ENCODE measurements at regions of chr1 and their contacts with region 1.

Region 1: GRCh38 chr1:228457396-228458176 is 29.6 kb upstream of the RNF187 start:
- DNase-seq: peak; percentile 92
- ATAC-seq: peak; percentile 89
- H3K4me3 Mint-ChIP-seq: peak overlapping the region; percentile 88
- H3K27ac Mint-ChIP-seq: peak overlapping the region; percentile 96
- H3K4me1 Mint-ChIP-seq: peaks cover 30% of the 10 kb centered on the region
- H3K27me3 Mint-ChIP-seq: no peaks in the 10 kb centered on the region

Region 2: GRCh38 chr1:228109073-228109961 is 348.3 kb before region 1 on chr1 and contains the start of gene MRPL55:
- CTCF ChIA-PET with region 1: no interaction called
- POLR2A ChIA-PET with region 1: no interaction called
- intact Hi-C with region 1: loop called in 1 of 2 experiments (anchors 2 kb)
- DNase-seq: peak; percentile 99
- ATAC-seq: peak; percentile 92
- H3K4me3 Mint-ChIP-seq: peak within 1 kb of the TSS; percentile 90
- H3K27ac Mint-ChIP-seq: peak within 1 kb of the TSS; percentile 92
- H3K4me1 Mint-ChIP-seq: peaks cover 21% of the 10 kb centered on the region
- H3K27me3 Mint-ChIP-seq: no peaks in the 10 kb centered on the region
- total RNA-seq, gene MRPL55: 51.0 to 57.7 TPM

Region 3: DNA sequence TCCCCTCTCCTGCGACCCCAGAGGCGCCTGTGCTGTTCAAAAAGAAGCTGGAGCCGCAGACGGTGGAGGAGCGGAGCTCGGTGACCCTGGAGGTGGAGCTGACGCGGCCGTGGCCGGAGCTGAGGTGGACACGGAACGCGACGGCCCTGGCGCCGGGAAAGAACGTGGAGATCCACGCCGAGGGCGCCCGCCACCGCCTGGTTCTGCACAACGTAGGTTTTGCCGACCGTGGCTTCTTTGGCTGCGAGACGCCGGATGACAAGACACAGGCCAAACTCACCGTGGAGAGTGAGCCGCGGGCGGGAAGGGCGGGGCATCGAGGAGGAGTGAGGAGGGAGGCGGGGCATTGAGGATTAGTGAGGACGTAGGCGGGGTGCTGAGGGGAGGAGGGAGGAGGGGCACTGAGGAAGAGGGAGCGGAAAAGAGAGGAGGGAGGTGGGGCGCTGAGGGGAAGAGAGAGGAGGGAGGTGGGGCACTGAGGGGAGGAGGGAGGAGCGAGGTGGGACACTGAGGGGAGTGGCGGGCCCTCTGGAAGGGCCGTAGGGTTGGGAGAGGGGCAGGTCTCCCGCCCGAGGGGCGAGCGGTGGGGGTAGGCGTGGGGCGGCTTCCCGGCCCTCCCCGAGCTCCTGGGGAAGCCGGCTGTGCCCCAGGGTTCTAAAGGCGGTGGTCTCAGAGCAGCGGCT is 181.7 kb before region 1 on chr1:
- CTCF ChIA-PET with region 1: interaction called, 5 read pairs
- POLR2A ChIA-PET with region 1: no interaction called
- intact Hi-C with region 1: loop called in 1 of 2 experiments (anchors 2 kb)
- DNase-seq: peak; percentile 94
- ATAC-seq: peak; percentile 96
- H3K4me3 Mint-ChIP-seq: peak overlapping the region; percentile 71
- H3K27ac Mint-ChIP-seq: no peak overlapping the region
- H3K4me1 Mint-ChIP-seq: peaks cover 6% of the 10 kb centered on the region
- H3K27me3 Mint-ChIP-seq: no peaks in the 10 kb centered on the region

Region 4: GRCh38 chr1:228471762-228472398 is 14.3 kb after region 1 on chr1:
- CTCF ChIA-PET with region 1: interaction called, 16 read pairs
- POLR2A ChIA-PET with region 1: no interaction called
- intact Hi-C with region 1: no loop called
- DNase-seq: peak; percentile 28
- ATAC-seq: peak; percentile 86
- H3K4me3 Mint-ChIP-seq: no peak overlapping the region
- H3K27ac Mint-ChIP-seq: no peak overlapping the region
- H3K4me1 Mint-ChIP-seq: peaks cover 8% of the 10 kb centered on the region
- H3K27me3 Mint-ChIP-seq: peaks cover 7% of the 10 kb centered on the region

Region 5: DNA sequence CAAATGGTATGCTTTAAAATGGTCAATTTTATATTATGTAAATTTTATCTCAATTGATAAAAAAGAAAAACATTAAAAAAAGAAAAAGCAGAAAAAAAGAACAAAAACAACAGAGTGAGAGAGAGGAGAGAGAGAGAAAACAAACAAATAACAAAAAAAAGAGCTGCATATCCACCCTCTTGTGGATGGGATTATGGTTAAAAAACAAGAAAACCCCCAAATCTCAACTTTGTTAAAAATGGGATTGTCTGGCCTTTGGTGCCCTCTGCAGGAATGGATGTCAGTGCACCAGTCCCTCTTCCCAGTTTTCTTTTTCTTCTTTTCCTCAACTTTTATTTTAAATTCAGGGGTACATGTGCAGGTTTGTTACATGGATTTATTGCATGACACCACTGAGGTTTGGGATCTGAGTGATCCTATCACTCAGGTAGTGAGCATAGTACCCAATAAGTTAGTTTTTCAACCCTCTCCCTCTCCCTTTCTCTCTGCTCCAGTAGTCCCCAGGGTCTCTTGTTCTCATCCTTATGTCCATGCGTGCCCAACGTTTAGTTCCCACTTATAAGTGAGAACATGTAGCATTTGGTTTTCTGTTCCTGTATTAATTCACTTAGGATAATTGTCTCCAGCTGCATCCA is 57.7 kb after region 1 on chr1:
- CTCF ChIA-PET with region 1: no interaction called
- POLR2A ChIA-PET with region 1: no interaction called
- intact Hi-C with region 1: no loop called
- DNase-seq: peak; percentile 45
- ATAC-seq: no peak
- H3K4me3 Mint-ChIP-seq: no peak overlapping the region
- H3K27ac Mint-ChIP-seq: no peak overlapping the region
- H3K4me1 Mint-ChIP-seq: peaks cover 8% of the 10 kb centered on the region
- H3K27me3 Mint-ChIP-seq: peaks cover 18% of the 10 kb centered on the region

Region 6: DNA sequence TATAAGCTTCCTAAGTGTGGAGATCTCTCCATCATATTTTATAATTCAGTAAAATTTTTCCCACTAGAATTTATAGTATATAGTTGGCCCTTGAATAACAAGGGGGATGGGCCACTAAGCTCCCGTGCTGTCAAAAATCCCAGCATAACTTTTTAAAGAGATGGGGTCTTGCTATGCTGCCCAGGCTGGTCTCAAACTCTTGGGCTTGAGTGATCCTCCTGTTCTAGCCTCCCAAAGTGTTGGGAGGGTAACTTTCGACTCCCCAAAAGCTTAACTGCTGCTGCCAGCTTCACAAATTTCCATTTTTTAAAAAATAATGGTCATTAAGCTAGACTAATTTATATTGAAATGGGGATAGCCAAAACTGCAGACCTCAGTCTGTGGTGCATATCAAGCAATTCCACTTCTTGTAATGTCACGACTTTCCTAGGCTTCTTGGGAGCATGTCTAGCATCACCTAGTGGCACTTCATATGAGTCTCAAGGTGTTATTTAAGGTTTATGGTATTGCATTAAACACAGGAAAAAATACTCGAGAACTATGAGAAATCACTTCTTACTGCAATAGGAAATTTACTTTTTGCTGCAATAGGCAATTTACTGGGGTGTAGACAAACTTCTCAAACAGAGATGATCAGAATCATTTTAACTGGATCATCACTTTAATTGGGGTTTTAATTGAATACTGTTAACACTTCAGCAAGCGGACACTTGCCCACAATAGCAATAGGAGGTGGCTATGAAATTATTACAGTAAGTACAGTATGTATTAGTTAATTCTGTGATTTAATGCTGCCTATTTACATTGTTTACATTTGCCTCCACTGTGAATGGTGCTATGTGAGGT is 995.6 kb after region 1 on chr1:
- CTCF ChIA-PET with region 1: no interaction called
- POLR2A ChIA-PET with region 1: no interaction called
- intact Hi-C with region 1: no loop called
- DNase-seq: no peak
- ATAC-seq: no peak
- H3K4me3 Mint-ChIP-seq: no peak overlapping the region
- H3K27ac Mint-ChIP-seq: no peak overlapping the region
- H3K4me1 Mint-ChIP-seq: no peaks in the 10 kb centered on the region
- H3K27me3 Mint-ChIP-seq: no peaks in the 10 kb centered on the region

Region 7: GRCh38 chr1:229507951-229508822 is 1050.6 kb after region 1 on chr1 and contains the start of gene NUP133:
- CTCF ChIA-PET with region 1: no interaction called
- POLR2A ChIA-PET with region 1: no interaction called
- intact Hi-C with region 1: loop called in 1 of 2 experiments (anchors 10 kb)
- DNase-seq: peak; percentile 100
- ATAC-seq: peak; percentile 95
- H3K4me3 Mint-ChIP-seq: peak within 1 kb of the TSS; percentile 95
- H3K27ac Mint-ChIP-seq: peak within 1 kb of the TSS; percentile 92
- H3K4me1 Mint-ChIP-seq: peaks cover 24% of the 10 kb centered on the region
- H3K27me3 Mint-ChIP-seq: no peaks in the 10 kb centered on the region
- total RNA-seq, gene NUP133: 53.5 to 57.5 TPM

Measured in activated CD4-positive, alpha-beta T cell treated with anti-CD3 and anti-CD28 coated beads for 36 hours (primary cell).